ENCODE measurements at regions of chr19 and their contacts with region 1.

Region 1: GRCh38 chr19:49097455-49098288 is 12.4 kb downstream of the SNRNP70 start:
- DNase-seq: peak; percentile 87
- H3K4me3 ChIP-seq: peak overlapping the region in 1 of 2 experiments; percentile 45; a peak in 1 of 4 replicates
- H3K27ac ChIP-seq: peak overlapping the region in 1 of 2 experiments; percentile 22; a peak in 1 of 4 replicates
- H3K4me1 ChIP-seq: no peaks in the 10 kb centered on the region
- H3K27me3 ChIP-seq: no peaks in the 10 kb centered on the region
- CTCF ChIP-seq: peak; percentile 99
- EP300 ChIP-seq: no peak
- RAD21 ChIP-seq: peak; percentile 83

Region 2: DNA sequence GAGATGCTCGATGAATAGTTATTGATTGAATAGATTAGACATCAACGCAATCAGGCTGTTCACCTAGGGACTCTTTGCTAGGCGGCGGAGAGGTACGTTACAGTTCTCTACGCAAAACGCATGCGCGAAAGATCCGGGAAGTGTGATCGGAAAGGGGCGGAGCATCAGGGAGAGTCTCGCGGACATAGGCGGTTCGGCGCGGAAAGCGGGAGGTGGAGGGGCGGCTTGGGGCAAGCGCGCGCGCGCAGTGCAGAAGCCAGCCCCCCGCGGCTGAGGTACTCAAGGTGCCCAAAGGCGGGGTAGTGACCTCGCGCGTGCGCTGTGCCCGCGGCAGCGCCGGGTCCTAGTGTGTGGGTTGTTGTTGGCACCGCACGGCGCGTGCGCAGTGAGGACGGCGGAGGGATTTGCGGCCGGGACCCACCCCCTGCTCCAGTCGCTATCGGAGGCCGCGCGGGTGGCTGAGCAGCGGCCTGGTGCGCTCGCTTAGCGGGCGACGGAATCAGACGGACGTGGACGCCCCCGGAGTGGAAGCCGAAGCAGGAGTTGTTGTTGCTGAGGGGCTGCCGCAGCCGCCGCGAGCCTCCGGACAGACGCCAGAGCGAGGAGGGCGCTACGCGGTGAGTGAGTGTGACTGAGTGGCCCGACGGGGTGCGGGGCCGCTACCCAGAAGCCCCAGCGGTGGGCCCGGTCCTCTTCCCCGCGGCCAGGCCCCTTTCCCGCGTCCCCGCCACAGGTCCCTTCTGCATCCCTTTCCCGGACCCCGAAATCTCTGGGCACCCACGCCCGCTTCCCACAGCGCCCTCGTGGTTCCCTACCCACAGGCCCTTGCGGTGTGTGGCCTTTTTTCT is 12.4 kb before region 1 on chr19 and contains the start of gene SNRNP70:
- CTCF ChIA-PET with region 1: interaction called, 40 read pairs
- POLR2A ChIA-PET with region 1: no interaction called
- DNase-seq: peak; percentile 100
- H3K4me3 ChIP-seq: peak within 1 kb of the TSS; percentile 78 to 99
- H3K27ac ChIP-seq: peak within 1 kb of the TSS; percentile 77 to 89
- H3K4me1 ChIP-seq: peaks cover 10 to 12% of the 10 kb centered on the region in 2 experiments; a peak in 1 of 4 replicates
- H3K27me3 ChIP-seq: no peaks in the 10 kb centered on the region
- CTCF ChIP-seq: no peak
- EP300 ChIP-seq: no peak
- RAD21 ChIP-seq: no peak
- polyA plus RNA-seq, gene SNRNP70: 272 and 359 TPM in 2 replicates

Region 3: DNA sequence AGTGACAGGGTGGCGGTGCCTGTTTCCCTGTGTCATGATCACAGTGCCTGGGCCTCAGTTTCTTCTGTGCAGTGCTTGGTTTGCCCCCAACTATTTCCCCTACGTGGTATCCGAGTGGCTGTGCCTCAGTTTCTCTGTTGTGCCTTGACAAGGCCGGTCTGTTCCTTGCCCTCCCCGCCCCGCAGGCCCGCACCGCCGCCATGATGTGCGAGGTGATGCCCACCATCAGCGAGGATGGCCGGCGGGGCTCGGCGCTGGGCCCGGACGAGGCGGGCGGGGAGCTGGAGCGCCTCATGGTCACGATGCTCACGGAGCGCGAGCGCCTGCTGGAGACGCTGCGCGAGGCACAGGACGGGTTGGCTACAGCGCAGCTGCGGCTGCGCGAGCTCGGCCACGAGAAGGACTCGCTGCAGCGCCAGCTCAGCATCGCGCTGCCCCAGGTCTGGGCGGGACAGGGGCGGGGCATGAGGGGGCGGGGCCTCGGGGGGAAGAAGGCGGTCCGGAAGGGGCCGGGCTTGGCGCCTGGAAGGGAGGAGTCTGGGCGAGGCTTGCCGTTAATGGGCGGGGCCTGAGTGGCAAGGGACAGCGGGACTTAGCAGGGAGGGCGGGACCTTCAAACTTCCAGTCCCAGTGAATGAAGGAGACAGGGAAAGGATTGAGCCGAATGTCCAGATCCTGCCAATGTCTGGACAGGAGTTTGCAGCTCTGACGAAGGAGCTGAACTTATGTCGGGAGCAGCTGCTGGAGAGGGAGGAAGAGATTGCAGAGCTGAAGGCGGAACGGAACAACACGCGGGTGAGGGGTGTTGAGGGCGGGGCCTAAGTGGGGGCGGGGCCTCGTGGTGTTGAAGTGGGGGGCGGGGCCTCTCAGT is 30.2 kb after region 1 on chr19:
- CTCF ChIA-PET with region 1: interaction called, 12 read pairs
- POLR2A ChIA-PET with region 1: interaction called, 3 read pairs
- DNase-seq: peak; percentile 99
- H3K4me3 ChIP-seq: peak overlapping the region; percentile 36 to 47; a peak in 3 of 4 replicates
- H3K27ac ChIP-seq: peak overlapping the region; percentile 30 to 73; a peak in 3 of 4 replicates
- H3K4me1 ChIP-seq: peaks cover 10 to 11% of the 10 kb centered on the region in 2 experiments; a peak in 2 of 4 replicates
- H3K27me3 ChIP-seq: no peaks in the 10 kb centered on the region
- CTCF ChIP-seq: peak; percentile 13; the same call in 1 of the 2 replicates
- EP300 ChIP-seq: no peak
- RAD21 ChIP-seq: peak; percentile 22; the same call in 1 of the 2 replicates

Region 4: GRCh38 chr19:49141352-49141751 is 43.7 kb after region 1 on chr19:
- CTCF ChIA-PET with region 1: interaction called, 87 read pairs
- POLR2A ChIA-PET with region 1: no interaction called
- DNase-seq: no peak
- H3K4me3 ChIP-seq: no peak overlapping the region
- H3K27ac ChIP-seq: no peak overlapping the region
- H3K4me1 ChIP-seq: peaks cover 3 to 14% of the 10 kb centered on the region in 2 experiments; a peak in 2 of 4 replicates
- H3K27me3 ChIP-seq: no peaks in the 10 kb centered on the region
- CTCF ChIP-seq: no peak
- EP300 ChIP-seq: no peak
- RAD21 ChIP-seq: no peak

Region 5: DNA sequence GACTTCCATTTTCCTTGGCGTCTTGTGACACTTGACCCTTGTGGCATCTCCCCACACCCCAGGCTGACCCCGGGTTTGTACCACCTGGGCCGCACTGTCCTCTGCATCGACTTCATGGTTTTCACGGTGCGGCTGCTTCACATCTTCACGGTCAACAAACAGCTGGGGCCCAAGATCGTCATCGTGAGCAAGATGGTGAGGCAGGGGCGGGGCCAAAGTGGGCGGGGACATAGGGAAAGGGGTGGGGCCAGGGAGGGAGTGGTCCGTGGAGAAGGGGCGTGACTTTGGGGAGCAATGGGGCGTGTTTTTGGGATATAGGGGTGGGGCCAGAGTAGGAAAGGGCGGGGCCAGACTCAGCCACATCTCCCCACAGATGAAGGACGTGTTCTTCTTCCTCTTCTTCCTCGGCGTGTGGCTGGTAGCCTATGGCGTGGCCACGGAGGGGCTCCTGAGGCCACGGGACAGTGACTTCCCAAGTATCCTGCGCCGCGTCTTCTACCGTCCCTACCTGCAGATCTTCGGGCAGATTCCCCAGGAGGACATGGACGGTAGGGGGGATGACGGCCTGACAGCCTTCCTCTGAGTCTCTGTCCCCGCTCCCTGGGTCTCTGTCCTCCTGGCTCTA is 102.7 kb after region 1 on chr19:
- CTCF ChIA-PET with region 1: interaction called, 64 read pairs
- POLR2A ChIA-PET with region 1: interaction called, 3 read pairs
- DNase-seq: peak; percentile 77
- H3K4me3 ChIP-seq: no peak overlapping the region
- H3K27ac ChIP-seq: no peak overlapping the region
- H3K4me1 ChIP-seq: no peaks in the 10 kb centered on the region; a peak in 1 of 4 replicates
- H3K27me3 ChIP-seq: no peaks in the 10 kb centered on the region
- CTCF ChIP-seq: no peak
- EP300 ChIP-seq: no peak
- RAD21 ChIP-seq: no peak

Region 6: DNA sequence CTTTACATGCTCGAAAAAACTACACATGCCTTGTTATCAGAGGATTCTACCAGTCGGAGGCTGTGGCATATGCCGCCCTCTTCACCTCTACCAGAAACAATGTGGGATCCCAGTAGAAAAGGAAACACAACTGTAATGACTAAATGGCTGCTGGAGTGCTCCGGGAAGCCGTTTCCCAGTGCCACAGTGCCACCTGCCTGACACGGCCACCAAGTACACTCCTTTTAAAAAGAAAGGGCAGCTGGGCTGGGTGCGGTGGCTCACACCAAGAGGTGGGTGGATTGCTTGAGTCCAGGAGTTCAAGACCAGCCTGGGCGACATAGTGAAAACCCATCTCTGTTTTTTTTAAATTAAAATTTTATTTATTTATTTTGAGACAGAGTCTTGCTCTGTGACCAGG is 127.2 kb after region 1 on chr19:
- CTCF ChIA-PET with region 1: interaction called, 10 read pairs
- POLR2A ChIA-PET with region 1: no interaction called
- DNase-seq: peak; percentile 66
- H3K4me3 ChIP-seq: peak overlapping the region in 1 of 2 experiments; percentile 30; a peak in 1 of 4 replicates
- H3K27ac ChIP-seq: no peak overlapping the region
- H3K4me1 ChIP-seq: no peaks in the 10 kb centered on the region; a peak in 1 of 4 replicates
- H3K27me3 ChIP-seq: peaks cover 15% of the 10 kb centered on the region; the same call in 1 of the 2 replicates
- CTCF ChIP-seq: peak; percentile 65
- EP300 ChIP-seq: no peak
- RAD21 ChIP-seq: peak; percentile 77

Measured in SK-N-SH (cell line).